ENCODE measurements at regions of chr5 and their contacts with region 1.

Region 1: GRCh38 chr5:102583276-102584124 is 84.7 kb upstream of the SLCO6A1 start:
- ATAC-seq: peak in 5 of 8 experiments; percentile 27 to 65 (median 57)
- H3K4me3 ChIP-seq: no peak overlapping the region
- H3K27ac ChIP-seq: no peak overlapping the region
- H3K4me1 ChIP-seq: peaks cover 0 to 9% of the 10 kb centered on the region in 2 donors

Region 2: DNA sequence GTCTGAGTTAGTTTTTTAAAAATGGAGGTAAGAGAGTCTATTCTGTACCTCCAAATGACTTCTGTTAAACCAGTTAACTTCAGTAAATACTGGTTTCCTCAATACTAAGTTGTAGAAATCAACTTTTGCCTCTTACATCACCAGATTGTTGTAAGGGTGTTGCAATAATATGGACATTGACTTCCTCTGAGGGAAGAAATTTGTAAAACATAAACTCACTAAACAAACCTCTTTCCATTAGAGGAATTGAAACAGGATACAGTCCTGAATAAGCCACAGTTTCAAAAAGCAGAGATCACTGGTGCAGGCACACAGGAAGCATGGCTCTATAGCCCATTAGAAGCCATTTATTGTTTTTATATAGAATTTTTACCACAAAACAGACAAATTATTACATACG is 52.0 kb before region 1 on chr5:
- in situ Hi-C with region 1: no loop called
- ATAC-seq: peak in 2 of 8 experiments; percentile 28 to 46
- H3K4me3 ChIP-seq: no peak overlapping the region
- H3K27ac ChIP-seq: no peak overlapping the region
- H3K4me1 ChIP-seq: no peaks in the 10 kb centered on the region

Region 3: DNA sequence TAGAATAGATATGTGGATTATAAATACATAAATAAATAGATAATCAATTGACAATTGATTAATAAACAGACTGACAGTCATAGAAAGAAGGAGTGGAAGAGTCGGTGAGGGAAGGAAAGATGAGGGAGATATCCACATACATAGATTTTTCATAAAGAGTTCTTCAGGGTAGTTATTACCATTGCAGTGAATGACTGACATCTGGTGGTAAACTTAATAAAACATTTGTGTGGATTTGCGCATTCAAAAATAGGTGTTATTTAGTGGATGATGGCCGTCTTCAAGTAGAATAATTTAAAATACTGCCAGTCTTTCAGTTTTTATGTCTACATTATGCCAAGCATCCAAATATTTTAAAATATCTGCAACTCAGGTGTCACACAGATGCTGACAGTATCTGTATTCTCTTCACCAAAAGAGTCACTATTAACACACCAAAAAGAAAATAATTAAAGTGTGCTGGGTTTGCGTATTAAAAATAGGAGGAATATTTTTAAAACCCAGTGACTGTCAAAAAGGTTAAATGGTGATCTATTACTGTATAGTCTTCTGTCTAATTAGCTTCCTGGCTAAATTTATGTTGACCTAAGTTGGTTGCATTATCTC is 457.7 kb after region 1 on chr5:
- in situ Hi-C with region 1: loop called in 2 of 9 experiments (anchors 25 kb)
- ATAC-seq: peak in 2 of 8 experiments; percentile 36 to 66
- H3K4me3 ChIP-seq: no peak overlapping the region
- H3K27ac ChIP-seq: no peak overlapping the region
- H3K4me1 ChIP-seq: no peaks in the 10 kb centered on the region

Region 4: DNA sequence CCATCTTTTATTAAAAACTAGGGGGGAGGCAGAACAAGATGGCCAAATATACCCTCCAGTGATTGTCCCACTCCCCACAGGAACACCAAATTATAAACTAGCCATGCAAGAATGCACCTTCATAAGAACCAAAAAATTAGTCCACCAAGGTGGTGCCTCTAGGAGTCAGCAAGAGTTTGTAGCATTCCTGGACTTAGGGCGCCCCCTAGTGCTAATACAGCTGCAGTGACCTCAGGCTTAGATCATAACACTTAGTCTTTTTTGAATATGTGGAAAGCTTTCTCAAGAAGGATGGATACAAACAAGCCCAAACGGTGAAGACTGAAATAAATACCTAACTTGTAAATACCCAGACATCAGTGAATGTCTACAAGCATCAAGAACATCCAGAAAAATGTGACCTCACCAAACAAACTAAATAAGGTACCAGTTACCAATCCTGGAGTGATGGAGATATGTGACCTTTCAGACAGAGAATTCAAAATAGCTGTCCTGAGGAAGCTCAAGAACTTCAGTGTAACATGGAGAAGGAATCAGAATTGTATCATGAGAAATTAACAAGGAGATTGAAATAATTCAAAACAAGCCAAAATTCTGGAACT is 555.9 kb after region 1 on chr5:
- in situ Hi-C with region 1: loop called in 1 of 9 experiments (anchors 25 kb)
- ATAC-seq: peak; percentile 64 to 95 (median 77)
- H3K4me3 ChIP-seq: no peak overlapping the region
- H3K27ac ChIP-seq: no peak overlapping the region
- H3K4me1 ChIP-seq: no peaks in the 10 kb centered on the region

Measured in motor neuron (in vitro differentiated cells).